Cardiac septum (tissue), 1 donor: ENCODE measurements at regions of chr20 and their contacts with region 1.

Region 1: DNA sequence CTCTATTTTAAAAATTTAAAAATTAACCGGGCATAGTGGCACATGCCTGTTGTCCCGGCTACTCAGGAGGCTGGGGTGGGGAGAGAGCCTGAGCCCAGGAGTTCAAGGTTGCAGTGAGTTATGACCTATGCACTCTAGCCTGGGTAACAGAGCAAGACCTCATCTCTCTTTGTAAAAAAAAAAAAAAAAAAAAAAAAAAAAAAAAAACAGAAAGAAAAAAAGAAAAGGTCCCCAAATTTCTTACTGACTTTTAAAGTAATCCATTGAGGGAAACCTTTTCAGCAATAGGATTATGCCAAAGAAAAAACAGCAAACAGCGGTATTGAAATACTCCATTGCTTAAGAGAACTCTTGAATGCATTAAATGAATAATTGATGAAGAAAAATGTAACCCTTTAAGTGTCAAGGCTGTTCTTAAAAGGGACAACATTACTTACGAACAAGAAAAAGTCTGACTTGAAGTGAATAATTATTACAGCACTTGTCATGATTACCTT is 6.0 kb upstream of the DNAAF9 start:
- DNase-seq: no peak

Region 2: GRCh38 chr20:3539311-3540107 is 126.1 kb after region 1 on chr20:
- intact Hi-C with region 1: loop called (anchors 10 kb)
- DNase-seq: no peak